ENCODE measurements at regions of chr16 and their contacts with region 1.

Region 1: GRCh38 chr16:24539291-24539849 is at the start of gene RBBP6:
- DNase-seq: peak; percentile 90 to 96 (median 95)
- ATAC-seq: peak; percentile 96
- H3K4me3 ChIP-seq: peak within 1 kb of the TSS; percentile 82
- H3K4me3 Mint-ChIP-seq: peak within 1 kb of the TSS; percentile 97 to 100 (median 99)
- H3K27ac ChIP-seq: peak within 1 kb of the TSS; percentile 100
- H3K27ac Mint-ChIP-seq: peak within 1 kb of the TSS; percentile 98 to 100 (median 100)
- H3K4me1 ChIP-seq: peaks cover 20 to 34% of the 10 kb centered on the region in 2 donors
- H3K4me1 Mint-ChIP-seq: peaks cover 22 to 50% (median 34%) of the 10 kb centered on the region in 7 donors
- H3K27me3 ChIP-seq: no peaks in the 10 kb centered on the region
- H3K27me3 Mint-ChIP-seq: peaks cover 0 to 2% (median 0%) of the 10 kb centered on the region in 5 donors
- total RNA-seq, gene RBBP6: 70.5 to 137 (median 106) TPM

Region 2: DNA sequence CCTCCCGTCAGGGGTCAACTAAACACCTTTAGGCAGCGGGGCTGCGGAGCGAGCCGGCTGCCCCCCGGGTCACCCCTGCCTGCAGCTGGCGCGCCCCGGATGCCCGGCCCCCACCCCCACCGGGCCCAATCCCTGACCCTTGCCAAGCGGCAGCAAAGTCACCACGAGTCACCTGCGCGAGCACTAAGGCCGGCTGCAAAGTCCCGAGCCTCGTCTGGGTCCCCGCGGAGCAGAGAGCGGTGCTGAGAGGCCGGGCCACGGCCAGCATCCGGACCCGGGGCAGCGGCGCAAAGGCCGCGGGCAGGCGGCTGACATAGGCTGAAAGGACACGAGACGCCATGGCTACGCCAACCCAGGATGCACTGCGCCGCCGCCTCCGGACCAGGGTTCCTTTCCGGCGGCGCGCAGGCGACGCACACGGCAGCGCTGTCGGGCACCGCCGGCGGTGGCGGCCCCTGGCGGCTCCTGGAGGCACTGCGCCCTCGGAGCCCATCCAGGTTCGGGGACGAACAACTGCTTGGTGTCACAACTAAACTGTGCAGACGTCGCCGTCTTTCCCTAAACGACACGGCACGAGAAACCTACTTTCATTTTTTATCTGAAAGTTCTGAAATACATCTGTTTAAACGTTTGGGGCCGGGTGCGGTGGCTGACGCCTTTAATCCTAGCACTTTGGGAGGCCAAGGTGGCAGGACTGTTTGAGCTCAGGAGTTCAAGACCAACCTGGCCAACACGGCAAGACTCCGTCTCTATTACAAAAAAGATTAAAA is 943.2 kb before region 1 on chr16 and contains the start of gene NDUFAB1:
- CTCF ChIA-PET with region 1: no interaction called
- POLR2A ChIA-PET with region 1: no interaction called
- intact Hi-C with region 1: loop called in 1 of 2 experiments (anchors 5 kb)
- DNase-seq: peak; percentile 82 to 97 (median 89)
- ATAC-seq: peak; percentile 100
- H3K4me3 ChIP-seq: peak within 1 kb of the TSS; percentile 82
- H3K4me3 Mint-ChIP-seq: peak within 1 kb of the TSS; percentile 74 to 89 (median 84)
- H3K27ac ChIP-seq: peak within 1 kb of the TSS; percentile 94
- H3K27ac Mint-ChIP-seq: peak within 1 kb of the TSS; percentile 65 to 89 (median 83)
- H3K4me1 ChIP-seq: peaks cover 5 to 13% of the 10 kb centered on the region in 2 donors
- H3K4me1 Mint-ChIP-seq: peaks cover 17 to 48% (median 29%) of the 10 kb centered on the region in 7 donors
- H3K27me3 ChIP-seq: no peaks in the 10 kb centered on the region
- H3K27me3 Mint-ChIP-seq: no peaks in the 10 kb centered on the region
- total RNA-seq, gene NDUFAB1: 24.2 to 85.3 (median 38.2) TPM

Region 3: GRCh38 chr16:24471561-24472350 is 67.6 kb before region 1 on chr16:
- CTCF ChIA-PET with region 1: no interaction called
- POLR2A ChIA-PET with region 1: no interaction called
- intact Hi-C with region 1: no loop called
- DNase-seq: no peak
- ATAC-seq: no peak
- H3K4me3 ChIP-seq: no peak overlapping the region
- H3K4me3 Mint-ChIP-seq: no peak overlapping the region
- H3K27ac ChIP-seq: no peak overlapping the region
- H3K27ac Mint-ChIP-seq: no peak overlapping the region
- H3K4me1 ChIP-seq: no peaks in the 10 kb centered on the region
- H3K4me1 Mint-ChIP-seq: no peaks in the 10 kb centered on the region
- H3K27me3 ChIP-seq: no peaks in the 10 kb centered on the region
- H3K27me3 Mint-ChIP-seq: peaks cover 0 to 47% (median 25%) of the 10 kb centered on the region in 5 donors

Region 4: DNA sequence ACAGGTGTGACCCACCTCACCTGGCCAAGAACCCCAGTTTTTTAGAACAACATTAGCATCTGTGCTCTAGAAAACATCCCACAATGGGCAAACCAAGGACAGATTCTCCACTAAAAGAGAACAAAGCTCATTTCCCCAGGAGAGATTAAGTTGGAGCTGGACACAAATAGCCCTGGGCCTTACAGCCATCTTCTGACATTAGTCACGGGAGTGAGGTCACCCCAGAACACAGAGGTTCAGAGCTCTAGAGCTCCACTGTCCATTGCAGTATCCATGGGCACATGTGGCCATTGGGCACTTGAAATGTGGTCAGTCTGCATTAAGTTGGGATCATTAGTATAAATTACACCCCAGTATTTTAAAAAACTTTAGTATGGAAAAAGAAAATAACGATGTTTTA is 47.6 kb before region 1 on chr16:
- CTCF ChIA-PET with region 1: no interaction called
- POLR2A ChIA-PET with region 1: no interaction called
- intact Hi-C with region 1: no loop called
- DNase-seq: no peak
- ATAC-seq: no peak
- H3K4me3 ChIP-seq: no peak overlapping the region
- H3K4me3 Mint-ChIP-seq: no peak overlapping the region
- H3K27ac ChIP-seq: no peak overlapping the region
- H3K27ac Mint-ChIP-seq: no peak overlapping the region
- H3K4me1 ChIP-seq: no peaks in the 10 kb centered on the region
- H3K4me1 Mint-ChIP-seq: peaks cover 0 to 2% (median 0%) of the 10 kb centered on the region in 7 donors
- H3K27me3 ChIP-seq: no peaks in the 10 kb centered on the region
- H3K27me3 Mint-ChIP-seq: peaks cover 13 to 23% (median 21%) of the 10 kb centered on the region in 5 donors

Region 5: GRCh38 chr16:24552705-24553246 is 13.4 kb after region 1 on chr16:
- CTCF ChIA-PET with region 1: interaction called, 4 read pairs
- POLR2A ChIA-PET with region 1: interaction called, 10 read pairs
- intact Hi-C with region 1: loop called in 1 of 2 experiments (anchors 1 kb)
- DNase-seq: no peak
- ATAC-seq: no peak
- H3K4me3 ChIP-seq: no peak overlapping the region
- H3K4me3 Mint-ChIP-seq: peak overlapping the region in 1 of 10 donors; percentile 26
- H3K27ac ChIP-seq: no peak overlapping the region
- H3K27ac Mint-ChIP-seq: peak overlapping the region in 3 of 9 donors; percentile 43 to 53 (median 45)
- H3K4me1 ChIP-seq: peaks cover 0 to 10% of the 10 kb centered on the region in 2 donors
- H3K4me1 Mint-ChIP-seq: peaks cover 21 to 59% (median 44%) of the 10 kb centered on the region in 7 donors
- H3K27me3 ChIP-seq: no peaks in the 10 kb centered on the region
- H3K27me3 Mint-ChIP-seq: no peaks in the 10 kb centered on the region

Region 6: GRCh38 chr16:24571096-24571495 is 31.7 kb after region 1 on chr16:
- CTCF ChIA-PET with region 1: no interaction called
- POLR2A ChIA-PET with region 1: no interaction called
- intact Hi-C with region 1: no loop called
- DNase-seq: no peak
- ATAC-seq: no peak
- H3K4me3 ChIP-seq: no peak overlapping the region
- H3K4me3 Mint-ChIP-seq: no peak overlapping the region
- H3K27ac ChIP-seq: no peak overlapping the region
- H3K27ac Mint-ChIP-seq: peak overlapping the region in 1 of 9 donors; percentile 53
- H3K4me1 ChIP-seq: no peaks in the 10 kb centered on the region
- H3K4me1 Mint-ChIP-seq: peaks cover 0 to 10% (median 0%) of the 10 kb centered on the region in 7 donors
- H3K27me3 ChIP-seq: no peaks in the 10 kb centered on the region
- H3K27me3 Mint-ChIP-seq: no peaks in the 10 kb centered on the region

Region 7: GRCh38 chr16:24800586-24800985 is 261.2 kb after region 1 on chr16:
- CTCF ChIA-PET with region 1: no interaction called
- POLR2A ChIA-PET with region 1: no interaction called
- intact Hi-C with region 1: loop called in 1 of 2 experiments (anchors 10 kb)
- DNase-seq: no peak
- ATAC-seq: no peak
- H3K4me3 ChIP-seq: no peak overlapping the region
- H3K4me3 Mint-ChIP-seq: no peak overlapping the region
- H3K27ac ChIP-seq: no peak overlapping the region
- H3K27ac Mint-ChIP-seq: peak overlapping the region in 1 of 9 donors; percentile 2
- H3K4me1 ChIP-seq: no peaks in the 10 kb centered on the region
- H3K4me1 Mint-ChIP-seq: peaks cover 0 to 16% (median 4%) of the 10 kb centered on the region in 7 donors
- H3K27me3 ChIP-seq: no peaks in the 10 kb centered on the region
- H3K27me3 Mint-ChIP-seq: no peaks in the 10 kb centered on the region

Region 8: GRCh38 chr16:25111403-25112166 is 572.2 kb after region 1 on chr16 and contains the start of gene LCMT1:
- CTCF ChIA-PET with region 1: no interaction called
- POLR2A ChIA-PET with region 1: no interaction called
- intact Hi-C with region 1: loop called (anchors 1 kb)
- DNase-seq: peak; percentile 68 to 96 (median 94)
- ATAC-seq: peak; percentile 93
- H3K4me3 ChIP-seq: peak within 1 kb of the TSS; percentile 90
- H3K4me3 Mint-ChIP-seq: peak within 1 kb of the TSS; percentile 89 to 99 (median 92)
- H3K27ac ChIP-seq: peak within 1 kb of the TSS; percentile 70
- H3K27ac Mint-ChIP-seq: peak within 1 kb of the TSS; percentile 62 to 98 (median 89)
- H3K4me1 ChIP-seq: peaks cover 12 to 17% of the 10 kb centered on the region in 2 donors
- H3K4me1 Mint-ChIP-seq: peaks cover 44 to 80% (median 64%) of the 10 kb centered on the region in 7 donors
- H3K27me3 ChIP-seq: no peaks in the 10 kb centered on the region
- H3K27me3 Mint-ChIP-seq: no peaks in the 10 kb centered on the region
- total RNA-seq, gene LCMT1: 30.2 to 36.9 (median 33.0) TPM

Measured in naive thymus-derived CD4-positive, alpha-beta T cell (primary cell).